CD4-positive, alpha-beta memory T cell (primary cell): ENCODE measurements at regions of chr2 and their contacts with region 1.

Region 1: GRCh38 chr2:12716282-12717190 is at the start of gene TRIB2:
- DNase-seq: peak; percentile 87 to 92 (median 89)
- H3K4me3 ChIP-seq: peak within 1 kb of the TSS; percentile 78 to 96
- H3K4me3 Mint-ChIP-seq: peak within 1 kb of the TSS; percentile 98 to 100 (median 99)
- H3K27ac ChIP-seq: peak within 1 kb of the TSS; percentile 84
- H3K27ac Mint-ChIP-seq: peak within 1 kb of the TSS; percentile 93 to 99 (median 96)
- H3K4me1 ChIP-seq: peaks cover 39% of the 10 kb centered on the region
- H3K4me1 Mint-ChIP-seq: peaks cover 28 to 83% (median 43%) of the 10 kb centered on the region in 4 donors
- H3K27me3 ChIP-seq: no peaks in the 10 kb centered on the region
- H3K27me3 Mint-ChIP-seq: peaks cover 0 to 2% of the 10 kb centered on the region in 2 donors
- total RNA-seq, gene TRIB2: 123 to 126 TPM

Region 2: GRCh38 chr2:11955314-11955713 is 761.2 kb before region 1 on chr2:
- CTCF ChIA-PET with region 1: no interaction called
- POLR2A ChIA-PET with region 1: no interaction called
- intact Hi-C with region 1: loop called (anchors 5 kb)
- DNase-seq: no peak
- H3K4me3 ChIP-seq: no peak overlapping the region
- H3K4me3 Mint-ChIP-seq: no peak overlapping the region
- H3K27ac ChIP-seq: no peak overlapping the region
- H3K27ac Mint-ChIP-seq: no peak overlapping the region
- H3K4me1 ChIP-seq: no peaks in the 10 kb centered on the region
- H3K4me1 Mint-ChIP-seq: peaks cover 0 to 3% (median 1%) of the 10 kb centered on the region in 4 donors
- H3K27me3 ChIP-seq: no peaks in the 10 kb centered on the region
- H3K27me3 Mint-ChIP-seq: peaks cover 10 to 14% of the 10 kb centered on the region in 2 donors

Region 3: DNA sequence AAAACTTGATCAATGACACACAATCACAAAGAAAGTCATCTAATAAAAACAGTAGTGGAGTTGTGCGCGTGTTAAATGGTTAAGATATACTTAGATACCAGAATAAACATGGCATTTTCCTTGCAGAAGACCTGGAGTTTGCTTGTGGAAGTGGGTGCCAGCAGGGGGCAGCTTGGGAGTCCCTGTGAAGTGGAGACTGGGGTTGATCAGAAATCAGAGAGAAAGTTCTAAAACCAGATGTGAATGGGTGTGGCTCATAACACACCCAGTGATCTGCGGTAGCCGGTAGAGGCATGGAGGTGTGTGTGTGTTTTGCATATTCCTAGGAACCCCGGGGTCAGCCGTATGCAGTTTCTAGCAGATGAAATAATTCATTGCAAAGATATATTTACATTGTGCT is 299.9 kb before region 1 on chr2:
- CTCF ChIA-PET with region 1: interaction called, 105 read pairs
- POLR2A ChIA-PET with region 1: interaction called, 58 read pairs
- intact Hi-C with region 1: loop called (anchors 1 kb)
- DNase-seq: peak; percentile 64 to 71 (median 68)
- H3K4me3 ChIP-seq: no peak overlapping the region
- H3K4me3 Mint-ChIP-seq: peak overlapping the region in 7 of 8 donors; percentile 9 to 68 (median 52)
- H3K27ac ChIP-seq: no peak overlapping the region
- H3K27ac Mint-ChIP-seq: peak overlapping the region in 6 of 7 donors; percentile 0 to 65 (median 46)
- H3K4me1 ChIP-seq: peaks cover 49% of the 10 kb centered on the region
- H3K4me1 Mint-ChIP-seq: peaks cover 34 to 75% (median 49%) of the 10 kb centered on the region in 4 donors
- H3K27me3 ChIP-seq: no peaks in the 10 kb centered on the region
- H3K27me3 Mint-ChIP-seq: no peaks in the 10 kb centered on the region

Region 4: GRCh38 chr2:12456293-12457151 is 260.0 kb before region 1 on chr2:
- CTCF ChIA-PET with region 1: interaction called, 32 read pairs
- POLR2A ChIA-PET with region 1: interaction called, 24 read pairs
- intact Hi-C with region 1: loop called (anchors 1 kb)
- DNase-seq: peak; percentile 52 to 69 (median 58)
- H3K4me3 ChIP-seq: peak overlapping the region; percentile 15 to 49
- H3K4me3 Mint-ChIP-seq: peak overlapping the region; percentile 76 to 90 (median 82)
- H3K27ac ChIP-seq: peak overlapping the region; percentile 48
- H3K27ac Mint-ChIP-seq: peak overlapping the region; percentile 87 to 96 (median 94)
- H3K4me1 ChIP-seq: peaks cover 37% of the 10 kb centered on the region
- H3K4me1 Mint-ChIP-seq: peaks cover 29 to 46% (median 35%) of the 10 kb centered on the region in 4 donors
- H3K27me3 ChIP-seq: no peaks in the 10 kb centered on the region
- H3K27me3 Mint-ChIP-seq: no peaks in the 10 kb centered on the region

Region 5: DNA sequence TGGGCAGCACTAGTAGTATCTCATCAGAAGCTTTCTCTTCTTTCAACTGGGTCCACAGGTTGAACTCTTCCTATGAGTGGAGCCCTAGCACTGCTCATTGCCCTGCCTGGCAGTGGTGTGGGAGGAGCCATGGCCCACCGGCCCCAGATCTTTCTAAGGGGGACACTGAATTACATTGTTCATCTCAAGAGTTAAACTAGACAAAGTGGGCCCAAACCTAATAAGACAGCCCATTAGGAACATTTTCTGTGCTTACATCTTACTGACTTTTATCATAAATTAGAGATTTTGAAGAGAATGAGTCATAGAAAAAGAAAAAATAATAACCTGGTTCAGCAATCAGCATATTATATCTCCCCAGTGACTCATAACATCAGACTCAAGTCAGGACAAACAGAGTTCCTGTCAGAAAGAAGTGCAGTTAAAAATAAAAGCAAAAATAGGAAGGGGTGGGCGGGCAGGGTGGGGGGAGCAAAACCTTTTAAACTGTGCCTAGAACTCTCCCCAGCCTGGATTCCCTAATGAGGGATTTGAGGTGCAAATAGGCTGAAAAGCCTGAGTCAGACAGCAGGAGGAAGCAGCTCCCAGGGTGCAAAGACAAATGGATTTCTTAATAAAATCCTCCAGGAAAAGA is 161.4 kb before region 1 on chr2:
- CTCF ChIA-PET with region 1: interaction called, 13 read pairs
- POLR2A ChIA-PET with region 1: interaction called, 33 read pairs
- intact Hi-C with region 1: loop called (anchors 2 kb)
- DNase-seq: peak in 2 of 5 donors; percentile 18 to 19
- H3K4me3 ChIP-seq: no peak overlapping the region
- H3K4me3 Mint-ChIP-seq: peak overlapping the region; percentile 6 to 75 (median 56)
- H3K27ac ChIP-seq: no peak overlapping the region
- H3K27ac Mint-ChIP-seq: peak overlapping the region; percentile 74 to 94 (median 87)
- H3K4me1 ChIP-seq: peaks cover 31% of the 10 kb centered on the region
- H3K4me1 Mint-ChIP-seq: peaks cover 33 to 49% (median 38%) of the 10 kb centered on the region in 4 donors
- H3K27me3 ChIP-seq: no peaks in the 10 kb centered on the region
- H3K27me3 Mint-ChIP-seq: no peaks in the 10 kb centered on the region

Region 6: GRCh38 chr2:12733846-12734245 is 17.3 kb after region 1 on chr2:
- CTCF ChIA-PET with region 1: interaction called, 56 read pairs
- POLR2A ChIA-PET with region 1: interaction called, 105 read pairs
- intact Hi-C with region 1: no loop called
- DNase-seq: no peak
- H3K4me3 ChIP-seq: no peak overlapping the region
- H3K4me3 Mint-ChIP-seq: peak overlapping the region in 2 of 8 donors; percentile 12 to 58
- H3K27ac ChIP-seq: peak overlapping the region; percentile 18
- H3K27ac Mint-ChIP-seq: peak overlapping the region; percentile 5 to 89 (median 77)
- H3K4me1 ChIP-seq: peaks cover 94% of the 10 kb centered on the region
- H3K4me1 Mint-ChIP-seq: peaks cover 70 to 91% (median 77%) of the 10 kb centered on the region in 4 donors
- H3K27me3 ChIP-seq: no peaks in the 10 kb centered on the region
- H3K27me3 Mint-ChIP-seq: no peaks in the 10 kb centered on the region

Region 7: DNA sequence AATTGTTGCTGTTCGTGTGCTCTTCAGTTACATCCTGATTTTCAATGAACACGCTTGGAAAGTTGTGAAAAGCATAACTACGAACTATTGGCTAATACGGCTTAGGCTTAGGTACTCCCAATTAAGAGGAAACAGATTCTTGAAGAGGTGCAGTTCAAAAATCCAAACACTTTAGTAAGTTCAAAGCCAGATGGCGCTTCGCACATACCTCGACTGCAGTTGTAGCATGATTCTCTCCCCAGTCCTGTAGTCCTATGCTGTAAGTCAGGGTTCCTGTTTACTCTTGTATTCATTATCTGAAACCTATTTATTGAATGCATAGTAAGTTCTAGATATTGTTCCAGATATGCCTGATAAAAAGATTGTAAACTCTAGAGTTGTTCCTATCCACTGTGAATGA is 165.4 kb after region 1 on chr2:
- CTCF ChIA-PET with region 1: no interaction called
- POLR2A ChIA-PET with region 1: no interaction called
- intact Hi-C with region 1: no loop called
- DNase-seq: no peak
- H3K4me3 ChIP-seq: no peak overlapping the region
- H3K4me3 Mint-ChIP-seq: no peak overlapping the region
- H3K27ac ChIP-seq: no peak overlapping the region
- H3K27ac Mint-ChIP-seq: no peak overlapping the region
- H3K4me1 ChIP-seq: no peaks in the 10 kb centered on the region
- H3K4me1 Mint-ChIP-seq: peaks cover 0 to 5% (median 2%) of the 10 kb centered on the region in 4 donors
- H3K27me3 ChIP-seq: no peaks in the 10 kb centered on the region
- H3K27me3 Mint-ChIP-seq: no peaks in the 10 kb centered on the region

Region 8: DNA sequence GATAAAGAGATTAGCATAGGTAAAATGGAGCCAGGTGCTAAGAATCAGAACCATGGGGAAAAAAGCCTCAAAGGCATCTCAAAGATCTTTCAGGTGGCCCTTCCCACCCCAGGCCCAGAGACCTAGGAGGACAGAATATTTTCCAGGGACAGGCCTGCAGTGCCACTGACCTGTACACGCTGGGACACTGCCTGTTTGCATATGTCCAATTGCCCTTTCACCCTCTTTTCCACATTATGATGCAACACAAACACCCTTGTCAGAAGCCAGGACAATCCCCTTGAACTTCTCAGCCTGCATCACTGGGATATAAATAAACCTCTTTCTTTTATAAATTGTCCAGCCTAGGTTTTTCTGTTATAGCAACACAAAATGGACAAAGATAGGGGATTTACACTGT is 419.3 kb after region 1 on chr2:
- CTCF ChIA-PET with region 1: no interaction called
- POLR2A ChIA-PET with region 1: no interaction called
- intact Hi-C with region 1: no loop called
- DNase-seq: no peak
- H3K4me3 ChIP-seq: no peak overlapping the region
- H3K4me3 Mint-ChIP-seq: no peak overlapping the region
- H3K27ac ChIP-seq: no peak overlapping the region
- H3K27ac Mint-ChIP-seq: no peak overlapping the region
- H3K4me1 ChIP-seq: no peaks in the 10 kb centered on the region
- H3K4me1 Mint-ChIP-seq: no peaks in the 10 kb centered on the region
- H3K27me3 ChIP-seq: no peaks in the 10 kb centered on the region
- H3K27me3 Mint-ChIP-seq: peaks cover 3% of the 10 kb centered on the region in 2 donors